ENCODE measurements at regions of chr1 and their contacts with region 1.

Region 1: DNA sequence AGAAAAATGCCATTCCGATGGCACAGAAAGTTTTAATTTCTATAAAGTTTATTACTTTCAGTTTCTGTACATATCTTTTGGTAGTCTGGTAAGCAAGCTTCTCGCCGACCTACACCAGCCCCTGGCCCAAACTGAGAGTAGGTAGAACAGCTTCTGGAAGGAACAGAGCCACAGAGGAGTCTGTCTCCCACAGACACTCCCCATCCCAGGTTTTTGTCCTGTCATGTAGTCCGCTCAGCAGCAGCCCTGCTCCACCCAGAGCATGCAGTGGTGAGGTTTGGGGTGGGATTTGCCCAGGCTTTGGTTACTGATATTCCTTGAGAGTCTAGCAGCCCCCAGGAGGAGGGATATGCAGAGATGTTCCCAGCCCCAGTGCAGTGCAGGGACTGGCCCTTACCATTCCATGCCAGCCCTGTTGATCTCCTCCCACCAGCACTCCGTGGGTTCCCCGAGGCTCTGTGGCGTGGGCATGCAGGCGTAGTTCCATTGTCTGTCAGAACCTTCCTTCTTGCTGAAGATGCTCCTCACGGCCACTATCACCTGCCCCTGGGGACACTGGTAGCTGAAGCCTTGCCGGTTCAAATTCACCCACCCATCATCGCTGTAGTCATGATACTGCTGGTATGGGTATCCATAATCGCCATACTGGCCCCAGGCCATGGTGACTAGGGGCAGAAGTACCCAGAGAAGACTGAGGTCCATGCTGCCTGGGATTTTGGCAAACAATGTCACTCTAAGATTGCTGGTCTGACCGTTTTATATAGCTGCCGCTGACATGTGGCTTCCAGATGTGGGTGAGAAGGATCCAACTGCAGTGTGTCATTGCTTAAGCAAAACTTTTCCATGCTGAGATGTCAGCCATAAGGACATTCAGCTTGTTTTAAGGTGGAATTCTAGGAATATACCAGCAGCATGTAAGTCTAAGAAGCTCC is at the start of gene DPT:
- DNase-seq: peak; percentile 20 to 44
- ATAC-seq: peak; percentile 31 to 84 (median 80)
- H3K4me3 ChIP-seq: peak within 1 kb of the TSS in 8 of 10 donors; percentile 31 to 55 (median 50)
- H3K27ac ChIP-seq: peak within 1 kb of the TSS in 8 of 10 donors; percentile 43 to 73 (median 63)
- H3K4me1 ChIP-seq: peaks cover 0 to 6% (median 0%) of the 10 kb centered on the region in 9 donors
- H3K27me3 ChIP-seq: no peaks in the 10 kb centered on the region
- CTCF ChIP-seq: no peak
- total RNA-seq, gene DPT: 25.4 to 61.2 (median 39.3) TPM

Region 2: GRCh38 chr1:168664069-168664834 is 64.5 kb before region 1 on chr1:
- intact Hi-C with region 1: no loop called
- DNase-seq: no peak
- ATAC-seq: no peak
- H3K4me3 ChIP-seq: no peak overlapping the region
- H3K27ac ChIP-seq: no peak overlapping the region
- H3K4me1 ChIP-seq: peaks cover 0 to 6% (median 0%) of the 10 kb centered on the region in 9 donors
- H3K27me3 ChIP-seq: no peaks in the 10 kb centered on the region
- CTCF ChIP-seq: no peak

Region 3: GRCh38 chr1:168767894-168768584 is 39.3 kb after region 1 on chr1:
- intact Hi-C with region 1: loop called in 2 of 10 experiments (anchors 5 kb)
- DNase-seq: peak; percentile 13 to 65
- ATAC-seq: peak; percentile 83 to 95 (median 91)
- H3K4me3 ChIP-seq: no peak overlapping the region
- H3K27ac ChIP-seq: peak overlapping the region in 9 of 10 donors; percentile 11 to 73 (median 59)
- H3K4me1 ChIP-seq: peaks cover 0 to 23% (median 12%) of the 10 kb centered on the region in 9 donors
- H3K27me3 ChIP-seq: no peaks in the 10 kb centered on the region
- CTCF ChIP-seq: no peak